Left colon (tissue), 2 donors: ENCODE measurements at regions of chr19 and their contacts with region 1.

Region 1: DNA sequence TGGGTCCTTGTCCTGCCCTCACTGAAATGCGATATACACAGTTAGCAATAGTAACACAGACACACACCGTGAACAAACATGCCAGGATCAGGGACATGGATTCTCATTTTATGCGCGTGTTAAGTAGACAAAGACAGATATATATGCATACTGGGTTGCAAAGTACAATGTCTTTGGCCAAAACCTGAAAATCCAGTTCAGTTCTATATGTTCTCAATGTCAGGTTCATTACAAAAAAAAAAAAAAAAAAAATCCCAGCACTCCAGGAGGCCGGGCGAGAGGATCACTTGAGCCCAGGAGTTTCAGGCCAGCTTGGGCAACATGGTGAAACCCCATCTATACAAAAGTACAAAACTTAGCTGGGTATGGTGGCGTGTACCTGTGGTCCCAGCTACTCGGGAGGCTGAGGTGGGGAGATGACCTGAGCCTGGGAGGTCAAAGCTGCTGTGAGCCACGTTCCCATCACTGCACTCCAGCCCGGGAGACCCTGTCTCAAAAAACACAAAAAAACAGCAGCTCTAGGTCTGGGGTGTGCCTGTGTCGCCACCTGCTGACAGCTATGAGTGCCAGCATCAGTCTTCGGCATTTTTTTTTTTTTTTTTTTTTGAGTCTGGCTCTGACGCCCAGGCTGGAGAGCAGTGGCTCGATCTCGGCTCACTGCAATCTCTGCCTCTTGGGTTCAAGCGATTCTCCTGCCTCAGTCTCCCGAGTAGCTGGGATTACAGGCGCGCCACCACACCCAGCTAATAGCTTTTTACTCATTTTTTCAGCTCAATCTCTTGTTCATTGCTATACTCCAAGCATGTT is 10.3 kb downstream of the AP2S1 start:
- DNase-seq: peak in 1 of 2 donors; percentile 70
- ATAC-seq: peak; percentile 63

Region 2: DNA sequence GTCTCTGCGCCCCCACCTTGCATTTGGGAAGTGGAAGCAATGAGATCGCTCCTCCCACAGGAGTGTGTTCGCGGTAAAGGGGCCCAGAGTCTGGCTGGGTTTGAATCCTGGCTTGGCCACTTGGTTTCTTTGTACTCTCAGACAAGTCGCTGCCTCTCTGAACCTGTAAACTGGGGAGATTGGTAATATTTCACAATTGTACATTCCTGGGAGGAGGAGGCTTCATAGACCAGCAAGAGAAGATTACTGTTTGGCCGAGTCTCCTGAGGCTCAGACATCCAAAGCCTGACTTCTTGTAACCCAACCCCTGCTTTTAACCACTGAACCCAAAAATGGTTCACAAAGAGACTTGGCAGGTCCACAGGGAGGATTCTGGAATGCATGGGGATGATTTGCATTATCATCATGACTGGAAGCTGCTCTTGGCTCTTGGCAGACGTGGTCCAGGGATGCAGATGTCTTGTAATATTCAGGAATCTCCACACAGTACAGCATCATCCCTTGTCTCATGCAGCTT is 80.5 kb before region 1 on chr19:
- intact Hi-C with region 1: loop called (anchors 2 to 5 kb)
- DNase-seq: no peak
- ATAC-seq: no peak

Region 3: DNA sequence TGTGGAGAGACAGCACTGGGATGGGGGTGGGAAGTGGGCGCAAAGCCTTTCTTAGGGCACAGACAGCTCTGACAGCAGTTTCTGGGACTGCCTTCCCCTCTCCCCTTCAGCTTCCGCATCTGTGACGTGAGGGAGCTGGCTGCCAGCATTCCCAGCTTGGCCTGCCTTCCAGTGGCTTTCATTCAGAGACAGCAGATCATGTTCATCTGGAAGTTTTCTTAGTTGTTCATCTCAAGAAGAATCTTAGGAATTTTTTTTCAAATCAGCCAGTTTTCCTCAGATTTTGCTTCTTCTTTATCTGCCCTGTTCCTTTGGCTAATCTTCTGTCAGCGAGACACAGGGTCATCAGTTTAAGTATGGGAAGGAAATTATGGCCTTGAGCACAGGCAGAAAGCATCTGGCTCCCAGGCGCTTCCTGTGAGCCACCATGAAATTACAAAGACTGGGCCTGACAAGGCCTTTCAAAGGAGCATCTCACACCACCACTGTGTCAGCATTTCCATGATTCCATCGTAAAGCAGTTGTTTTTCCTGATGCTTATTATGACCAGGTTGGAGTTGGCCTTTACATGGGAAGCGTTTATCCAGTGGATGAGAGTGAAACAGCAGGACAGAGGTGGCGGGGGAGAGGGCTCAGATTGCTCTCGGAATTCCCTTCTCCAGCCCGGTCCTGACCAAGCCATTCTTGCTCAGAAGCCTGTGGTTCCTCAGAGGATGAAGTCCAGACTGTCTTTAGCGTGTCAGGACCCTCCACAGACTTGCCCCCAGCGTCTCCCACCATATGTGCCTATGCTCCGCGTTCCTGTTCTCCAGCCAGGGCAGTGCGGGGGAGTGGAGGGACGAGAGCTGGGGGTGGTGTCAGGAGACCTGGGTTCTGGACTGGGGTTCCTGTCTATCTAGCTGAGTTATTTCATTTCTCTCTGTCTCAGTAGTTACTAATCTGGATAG is 64.0 kb after region 1 on chr19:
- intact Hi-C with region 1: no loop called
- DNase-seq: no peak
- ATAC-seq: no peak